ENCODE measurements at regions of chr2 and their contacts with region 1.

Region 1: GRCh38 chr2:45650851-45651414 is 542 bp upstream of the PRKCE start:
- DNase-seq: peak; percentile 93 to 97 (median 96)
- ATAC-seq: peak; percentile 71 to 88 (median 82)
- H3K4me3 ChIP-seq: peak overlapping the region; percentile 54 to 95 (median 84)
- H3K27ac ChIP-seq: peak overlapping the region; percentile 97 to 100 (median 100)
- H3K4me1 ChIP-seq: peaks cover 4 to 43% (median 34%) of the 10 kb centered on the region in 12 donors
- H3K27me3 ChIP-seq: no peaks in the 10 kb centered on the region
- CTCF ChIP-seq: peak in 10 of 12 donors; percentile 9 to 56 (median 43)
- POLR2A ChIP-seq: peak in 1 of 2 donors; percentile 88

Region 2: GRCh38 chr2:45533771-45534170 is 117.2 kb before region 1 on chr2:
- intact Hi-C with region 1: no loop called
- DNase-seq: no peak
- ATAC-seq: no peak
- H3K4me3 ChIP-seq: no peak overlapping the region
- H3K27ac ChIP-seq: no peak overlapping the region
- H3K4me1 ChIP-seq: no peaks in the 10 kb centered on the region
- H3K27me3 ChIP-seq: no peaks in the 10 kb centered on the region
- CTCF ChIP-seq: no peak
- POLR2A ChIP-seq: no peak

Region 3: DNA sequence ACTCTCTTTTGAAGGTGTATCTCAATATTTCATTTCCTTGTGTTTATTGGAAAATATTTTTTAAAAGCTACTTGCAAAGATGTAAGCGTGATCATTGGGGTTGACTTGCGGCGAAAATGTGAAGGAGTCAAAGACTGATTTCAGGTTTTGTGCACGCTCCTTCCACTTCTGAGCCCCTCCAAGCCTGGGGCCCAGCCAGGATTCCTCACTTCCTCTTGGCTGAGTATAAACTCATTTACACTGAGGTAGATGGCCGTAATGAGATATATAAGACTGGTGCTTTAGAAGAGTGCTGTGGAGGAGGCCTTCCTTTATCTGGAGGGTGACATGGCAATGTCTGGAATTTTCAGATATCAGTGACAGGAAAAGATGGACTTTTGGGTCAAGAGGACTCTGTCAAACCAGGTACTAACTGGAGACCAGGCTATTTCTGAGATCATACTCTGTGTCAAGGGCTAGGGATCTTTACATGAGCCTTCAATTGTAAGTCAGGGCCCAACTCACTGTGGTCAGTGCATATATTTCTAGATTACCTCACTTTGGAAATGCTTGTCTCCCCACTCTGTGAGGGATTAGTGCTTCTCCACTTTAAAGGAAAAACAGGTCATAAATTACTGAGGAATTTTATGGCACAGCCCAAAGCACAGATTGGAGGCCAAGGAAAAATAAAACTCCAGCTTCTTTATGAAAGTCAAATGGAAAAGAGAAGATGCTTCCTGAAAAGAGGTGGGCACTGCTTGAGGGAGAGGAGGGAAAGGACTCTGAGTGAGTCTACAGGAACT is 23.3 kb after region 1 on chr2:
- intact Hi-C with region 1: loop called in 1 of 10 experiments (anchors 1 kb)
- DNase-seq: no peak
- ATAC-seq: no peak
- H3K4me3 ChIP-seq: no peak overlapping the region
- H3K27ac ChIP-seq: peak overlapping the region in 2 of 12 donors; percentile 46 to 68
- H3K4me1 ChIP-seq: peaks cover 0 to 33% (median 29%) of the 10 kb centered on the region in 12 donors
- H3K27me3 ChIP-seq: no peaks in the 10 kb centered on the region
- CTCF ChIP-seq: no peak
- POLR2A ChIP-seq: no peak

Region 4: DNA sequence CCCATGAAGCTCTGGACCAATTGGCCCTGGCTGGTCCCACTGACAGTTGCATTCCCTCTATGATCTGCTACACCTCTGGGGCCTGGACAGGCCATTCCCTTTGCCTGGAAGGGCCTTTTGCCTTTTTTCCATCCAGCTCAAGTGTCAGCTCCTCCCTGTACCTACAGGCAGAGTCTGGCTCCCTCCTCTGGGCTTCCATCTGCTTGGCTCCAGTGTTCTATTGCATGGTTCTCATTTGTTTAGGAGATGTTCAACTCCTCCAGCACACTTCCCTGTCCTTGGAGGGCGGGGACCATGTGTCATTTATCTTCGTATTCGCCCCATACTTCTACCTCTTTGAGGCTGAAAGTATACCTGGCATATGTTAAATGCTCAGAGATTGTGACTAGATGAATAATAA is 61.6 kb after region 1 on chr2:
- intact Hi-C with region 1: loop called in 3 of 10 experiments (anchors 5 kb)
- DNase-seq: no peak
- ATAC-seq: no peak
- H3K4me3 ChIP-seq: no peak overlapping the region
- H3K27ac ChIP-seq: no peak overlapping the region
- H3K4me1 ChIP-seq: peaks cover 0 to 30% (median 7%) of the 10 kb centered on the region in 12 donors
- H3K27me3 ChIP-seq: no peaks in the 10 kb centered on the region
- CTCF ChIP-seq: no peak
- POLR2A ChIP-seq: no peak

Region 5: GRCh38 chr2:45778720-45779171 is 127.8 kb after region 1 on chr2:
- intact Hi-C with region 1: loop called in 4 of 10 experiments (anchors 2 to 5 kb)
- DNase-seq: peak in 4 of 5 donors; percentile 44 to 72 (median 65)
- ATAC-seq: peak; percentile 50 to 64 (median 58)
- H3K4me3 ChIP-seq: no peak overlapping the region
- H3K27ac ChIP-seq: no peak overlapping the region
- H3K4me1 ChIP-seq: peaks cover 0 to 48% (median 24%) of the 10 kb centered on the region in 12 donors
- H3K27me3 ChIP-seq: no peaks in the 10 kb centered on the region
- CTCF ChIP-seq: peak; percentile 69 to 88 (median 80)
- POLR2A ChIP-seq: no peak

Region 6: DNA sequence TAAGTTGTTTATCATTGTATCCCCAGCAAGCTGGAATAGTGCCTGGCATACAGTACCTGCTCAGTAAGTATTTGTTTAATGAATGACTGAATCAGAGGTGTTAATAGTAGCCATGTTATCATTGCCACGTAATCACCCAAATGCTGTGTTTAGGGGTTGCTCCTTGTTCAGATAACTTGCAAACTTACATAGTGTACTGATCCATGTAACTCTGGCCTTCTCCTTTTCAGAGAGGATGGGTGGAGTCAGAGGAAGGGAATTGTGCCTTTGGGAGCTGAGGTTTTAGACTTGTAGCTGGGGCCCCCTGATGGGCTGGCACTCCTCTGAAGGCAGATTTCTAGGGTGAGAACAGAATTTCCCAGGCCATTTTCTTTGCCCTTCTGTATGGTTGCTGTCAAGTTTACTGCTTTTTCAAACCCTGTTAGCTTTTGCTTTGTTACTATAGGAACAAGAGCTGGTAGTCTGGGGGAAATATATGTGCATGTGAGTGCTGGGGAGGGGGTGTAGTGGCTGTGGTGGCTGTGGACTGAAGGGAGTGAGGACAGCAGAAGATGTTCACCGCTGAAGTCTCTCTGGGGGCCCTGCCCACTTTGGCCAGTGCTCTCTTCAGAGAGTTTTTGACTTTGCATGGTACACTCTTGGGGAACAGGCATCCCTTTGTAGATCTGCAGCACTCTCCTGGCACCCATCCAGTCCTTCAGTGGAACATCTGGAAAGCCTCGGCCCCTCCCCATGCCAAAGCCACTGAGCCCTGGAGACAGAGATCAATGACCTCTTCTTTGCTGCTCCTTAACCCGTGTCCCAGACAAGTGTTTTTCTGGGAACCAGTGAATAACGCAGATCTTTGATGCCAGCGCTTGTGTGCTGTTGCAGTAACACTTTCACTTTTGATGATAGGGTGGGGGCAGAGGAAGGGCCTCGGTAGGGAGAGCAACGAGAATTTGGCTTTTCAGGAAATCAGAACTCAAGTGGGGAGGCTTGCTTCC is 209.5 kb after region 1 on chr2:
- intact Hi-C with region 1: loop called in 3 of 10 experiments (anchors 5 to 10 kb)
- DNase-seq: peak; percentile 53 to 81 (median 64)
- ATAC-seq: peak; percentile 42 to 79 (median 66)
- H3K4me3 ChIP-seq: peak overlapping the region in 9 of 12 donors; percentile 22 to 50 (median 34)
- H3K27ac ChIP-seq: peak overlapping the region in 11 of 12 donors; percentile 41 to 73 (median 48)
- H3K4me1 ChIP-seq: peaks cover 4 to 61% (median 28%) of the 10 kb centered on the region in 12 donors
- H3K27me3 ChIP-seq: no peaks in the 10 kb centered on the region
- CTCF ChIP-seq: peak in 7 of 12 donors; percentile 8 to 35 (median 22)
- POLR2A ChIP-seq: no peak

Measured in heart left ventricle (tissue), 16 donors.